GM13977 (cell line): ENCODE measurements at regions of chr19 and their contacts with region 1.

Region 1: DNA sequence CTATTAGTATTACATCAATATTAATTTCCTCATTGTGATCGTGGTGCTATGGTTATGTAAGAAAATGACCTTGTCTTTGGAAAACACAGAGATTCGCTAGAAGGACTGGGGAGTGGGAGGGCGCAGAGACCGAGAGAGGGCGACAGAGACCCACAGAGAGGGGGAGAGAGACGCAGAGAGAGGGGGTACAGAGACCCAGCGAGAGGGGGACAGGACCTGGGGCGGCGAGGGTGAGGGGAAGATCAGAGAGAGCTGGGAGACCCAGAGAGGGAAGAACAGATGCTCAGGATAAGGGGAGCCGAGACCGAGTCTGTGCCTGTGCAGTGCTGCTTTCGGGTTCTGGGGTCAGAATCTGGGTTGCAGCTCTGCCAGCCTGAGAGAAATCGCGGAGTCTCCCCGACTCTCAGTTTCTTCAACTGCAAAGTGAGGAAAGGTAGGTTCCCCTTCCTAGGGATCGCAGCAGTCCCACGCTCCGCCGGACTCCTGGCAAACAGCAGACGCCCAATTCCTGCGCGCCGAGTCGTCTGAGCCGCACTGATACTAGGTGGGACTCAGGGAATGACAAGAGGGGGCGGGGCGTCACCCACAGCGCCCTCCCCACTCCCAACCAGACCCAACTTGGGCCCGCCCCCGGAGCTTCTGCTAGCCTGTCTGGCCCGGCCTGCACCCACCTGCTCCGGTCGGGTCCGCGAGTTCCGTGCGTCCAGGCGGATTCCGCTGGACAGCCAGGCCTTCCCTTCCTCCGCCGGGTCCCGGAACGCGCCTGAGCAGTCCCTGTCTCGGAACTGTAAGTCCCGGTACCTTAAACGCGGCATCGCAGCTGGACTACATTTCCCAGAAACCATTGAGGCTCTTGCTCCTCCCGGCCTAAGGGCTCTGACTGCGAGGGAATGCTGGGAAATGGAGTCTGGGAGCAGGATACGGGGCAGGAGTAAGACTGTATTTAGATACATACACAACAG is 15.3 kb downstream of the IZUMO2 start:
- DNase-seq: peak; percentile 71
- CTCF ChIP-seq: peak; percentile 48

Region 2: GRCh38 chr19:49929611-49930482 is 217.9 kb before region 1 on chr19:
- in situ Hi-C with region 1: loop called (anchors 25 kb)
- DNase-seq: peak; percentile 99
- CTCF ChIP-seq: no peak

Region 3: GRCh38 chr19:50050384-50051224 is 97.1 kb before region 1 on chr19:
- in situ Hi-C with region 1: no loop called
- DNase-seq: peak; percentile 78
- CTCF ChIP-seq: no peak

Region 4: GRCh38 chr19:50067575-50067974 is 80.2 kb before region 1 on chr19:
- in situ Hi-C with region 1: no loop called
- DNase-seq: no peak
- CTCF ChIP-seq: no peak

Region 5: DNA sequence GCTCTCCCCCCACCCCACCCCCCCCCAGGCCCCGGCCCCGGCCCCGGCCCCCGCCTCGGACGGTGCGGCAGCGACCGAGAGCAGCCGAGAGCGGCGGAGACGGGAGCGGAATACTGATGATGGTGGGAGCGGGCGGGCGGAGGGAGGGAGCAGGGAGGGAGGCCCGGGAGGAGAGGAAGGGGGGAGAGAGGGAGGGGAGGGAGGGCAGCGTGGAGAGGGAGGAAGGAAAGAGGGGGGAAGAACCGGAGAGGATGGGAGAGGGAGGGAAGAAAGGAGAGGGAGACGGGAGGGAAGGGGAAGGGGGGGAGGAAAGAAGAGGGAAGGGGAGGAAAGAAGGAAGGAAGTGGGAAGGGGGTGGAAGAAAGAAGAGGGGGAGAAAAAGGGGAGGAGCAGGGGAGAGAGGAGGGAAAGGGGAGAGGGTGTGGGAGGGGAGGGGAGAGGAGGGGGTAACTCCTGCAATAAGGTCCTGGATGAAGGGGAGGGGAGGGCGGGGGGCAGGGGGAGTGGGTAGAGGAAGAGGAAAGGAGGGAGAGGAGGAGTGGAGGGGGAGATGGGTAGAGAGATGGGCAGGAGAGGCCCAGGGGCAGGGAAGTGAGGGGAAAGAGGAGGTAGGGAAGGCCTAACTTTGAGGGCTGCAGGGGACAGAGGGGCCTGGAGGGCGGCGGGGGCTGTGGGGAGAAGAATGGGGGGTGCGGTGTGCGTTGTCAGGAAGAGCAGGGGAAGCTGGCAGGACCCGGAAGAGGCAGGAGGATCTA is 420.8 kb after region 1 on chr19 and contains the start of gene LRRC4B:
- in situ Hi-C with region 1: no loop called
- DNase-seq: no peak
- CTCF ChIP-seq: no peak